Right ventricle myocardium inferior (tissue), 1 donor: ENCODE measurements at regions of chr16 and their contacts with region 1.

Region 1: GRCh38 chr16:684067-684794 is at the start of gene JMJD8:
- DNase-seq: peak; percentile 99
- ATAC-seq: peak; percentile 76
- total RNA-seq, gene JMJD8: 46.4 TPM

Region 2: DNA sequence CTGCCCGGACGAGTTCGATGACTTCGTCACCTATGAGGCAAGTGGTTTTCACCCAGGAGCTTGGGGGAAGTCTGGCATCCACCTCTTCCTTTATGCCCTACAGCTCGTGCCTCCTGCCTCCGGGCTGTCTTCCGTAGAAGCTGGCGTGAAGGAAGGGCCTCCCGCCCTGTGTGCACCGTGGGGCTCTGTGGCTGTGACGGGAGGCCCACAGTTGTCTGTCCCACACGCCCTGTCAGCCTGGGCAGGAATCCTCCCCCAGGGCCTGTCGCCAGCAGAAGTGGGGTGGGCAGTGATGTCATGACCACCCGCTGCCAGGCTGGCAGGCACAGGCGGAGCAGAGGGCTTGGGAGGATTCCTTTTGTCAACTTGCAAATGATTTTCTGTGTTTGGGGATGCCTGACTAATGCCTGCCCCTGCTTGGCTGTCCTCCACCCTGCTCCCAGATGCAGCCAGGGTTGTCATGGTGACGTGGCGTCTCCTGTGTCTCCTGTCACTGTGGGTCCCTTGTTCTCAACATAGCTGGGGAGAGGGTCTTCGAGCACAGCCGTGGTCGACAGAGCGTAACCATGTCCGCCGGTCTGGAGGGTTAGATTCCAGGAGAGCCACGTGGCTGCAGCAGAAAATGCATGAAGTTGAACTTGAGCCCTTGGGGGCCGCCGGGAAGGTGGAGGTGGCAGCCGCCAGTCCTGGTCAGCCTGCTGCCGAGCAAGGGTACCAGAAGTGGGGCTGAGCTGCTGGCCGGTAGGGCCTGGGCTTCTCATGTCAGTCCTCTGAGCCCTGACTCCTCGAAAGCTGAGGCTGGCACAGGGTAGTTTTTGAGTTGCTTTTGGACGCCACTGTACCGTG is 212.7 kb before region 1 on chr16:
- intact Hi-C with region 1: no loop called
- DNase-seq: no peak
- ATAC-seq: peak; percentile 24

Region 3: GRCh38 chr16:720990-721764 is 36.9 kb after region 1 on chr16 and contains the start of gene ANTKMT:
- intact Hi-C with region 1: loop called (anchors 5 kb)
- DNase-seq: peak; percentile 89
- ATAC-seq: peak; percentile 88
- total RNA-seq, gene ANTKMT: 29.1 TPM

Region 4: DNA sequence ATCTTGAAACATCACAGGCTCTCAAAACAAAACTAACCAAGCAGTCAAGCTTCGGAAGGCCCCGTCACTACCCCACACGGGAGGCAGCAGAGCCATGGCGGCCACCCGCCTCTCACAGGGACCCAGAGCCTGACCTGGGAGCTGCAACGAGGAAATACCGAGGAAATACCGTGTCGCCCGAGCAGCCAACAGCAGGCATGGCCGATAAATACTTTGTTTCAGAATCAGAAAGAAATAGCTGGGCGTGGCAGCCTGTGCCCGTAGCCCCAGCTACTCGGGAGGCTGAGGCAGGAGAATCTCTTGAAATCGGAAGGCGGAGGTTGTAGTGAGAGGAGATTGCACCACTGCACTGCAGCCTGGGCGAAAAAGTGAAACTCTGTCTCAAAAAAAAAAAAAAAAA is 279.7 kb after region 1 on chr16:
- intact Hi-C with region 1: no loop called
- DNase-seq: no peak
- ATAC-seq: no peak

Region 5: GRCh38 chr16:2340564-2341455 is 1656.6 kb after region 1 on chr16 and contains the start of gene ABCA3:
- intact Hi-C with region 1: loop called (anchors 10 kb)
- DNase-seq: peak; percentile 95
- ATAC-seq: peak; percentile 98
- total RNA-seq, gene ABCA3: 7.4 TPM